H1 (cell line): ENCODE measurements at regions of chr1 and their contacts with region 1.

Region 1: GRCh38 chr1:93021539-93022134 is 57.4 kb upstream of the MTF2 start:
- DNase-seq: no peak
- H3K4me3 ChIP-seq: no peak overlapping the region
- H3K27ac ChIP-seq: no peak overlapping the region
- H3K4me1 ChIP-seq: no peaks in the 10 kb centered on the region; a peak in 1 of 7 replicates
- H3K27me3 ChIP-seq: no peaks in the 10 kb centered on the region
- CTCF ChIP-seq: peak in 2 of 3 experiments; percentile 55 to 71; a peak in 2 of 4 replicates
- EP300 ChIP-seq: no peak
- POLR2A ChIP-seq: no peak
- RAD21 ChIP-seq: peak; percentile 82 to 84

Region 2: GRCh38 chr1:92886886-92887419 is 134.7 kb before region 1 on chr1:
- CTCF ChIA-PET with region 1: no interaction called
- POLR2A ChIA-PET with region 1: no interaction called
- DNase-seq: no peak
- H3K4me3 ChIP-seq: no peak overlapping the region
- H3K27ac ChIP-seq: no peak overlapping the region
- H3K4me1 ChIP-seq: no peaks in the 10 kb centered on the region
- H3K27me3 ChIP-seq: no peaks in the 10 kb centered on the region
- CTCF ChIP-seq: no peak
- EP300 ChIP-seq: no peak
- POLR2A ChIP-seq: no peak
- RAD21 ChIP-seq: no peak

Region 3: GRCh38 chr1:93007941-93008577 is 13.6 kb before region 1 on chr1:
- CTCF ChIA-PET with region 1: interaction called, 30 read pairs
- POLR2A ChIA-PET with region 1: interaction called, 4 read pairs
- DNase-seq: peak in 1 of 2 experiments; percentile 26
- H3K4me3 ChIP-seq: no peak overlapping the region
- H3K27ac ChIP-seq: no peak overlapping the region
- H3K4me1 ChIP-seq: no peaks in the 10 kb centered on the region
- H3K27me3 ChIP-seq: no peaks in the 10 kb centered on the region
- CTCF ChIP-seq: no peak
- EP300 ChIP-seq: no peak
- POLR2A ChIP-seq: no peak
- RAD21 ChIP-seq: no peak